Heart left ventricle (tissue), 16 donors: ENCODE measurements at regions of chr3 and their contacts with region 1.

Region 1: DNA sequence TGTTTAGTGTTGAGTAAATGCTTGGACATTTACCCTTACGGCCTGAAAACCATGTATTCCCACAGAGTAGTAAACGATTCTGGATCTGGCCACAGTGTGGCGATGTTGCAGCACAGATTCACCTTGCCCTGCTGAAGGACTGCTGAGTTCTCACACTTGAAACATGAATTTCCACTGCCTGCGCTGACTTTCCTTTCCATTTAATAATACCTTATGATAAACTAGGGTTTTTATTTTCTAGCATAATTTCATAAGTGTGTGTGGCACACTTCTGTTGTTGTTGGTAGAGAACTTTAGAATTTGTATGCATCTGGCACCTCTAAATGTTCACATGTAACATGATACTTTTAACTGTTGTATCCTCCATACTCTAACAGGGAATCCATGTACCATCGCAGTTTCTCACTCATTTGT is 53.9 kb downstream of the C3orf38 start:
- DNase-seq: peak; percentile 53 to 68 (median 60)
- ATAC-seq: peak in 3 of 4 donors; percentile 79 to 93 (median 84)
- H3K4me3 ChIP-seq: no peak overlapping the region
- H3K27ac ChIP-seq: no peak overlapping the region
- H3K4me1 ChIP-seq: no peaks in the 10 kb centered on the region
- H3K27me3 ChIP-seq: no peaks in the 10 kb centered on the region
- CTCF ChIP-seq: peak; percentile 69 to 89 (median 83)
- POLR2A ChIP-seq: no peak

Region 2: DNA sequence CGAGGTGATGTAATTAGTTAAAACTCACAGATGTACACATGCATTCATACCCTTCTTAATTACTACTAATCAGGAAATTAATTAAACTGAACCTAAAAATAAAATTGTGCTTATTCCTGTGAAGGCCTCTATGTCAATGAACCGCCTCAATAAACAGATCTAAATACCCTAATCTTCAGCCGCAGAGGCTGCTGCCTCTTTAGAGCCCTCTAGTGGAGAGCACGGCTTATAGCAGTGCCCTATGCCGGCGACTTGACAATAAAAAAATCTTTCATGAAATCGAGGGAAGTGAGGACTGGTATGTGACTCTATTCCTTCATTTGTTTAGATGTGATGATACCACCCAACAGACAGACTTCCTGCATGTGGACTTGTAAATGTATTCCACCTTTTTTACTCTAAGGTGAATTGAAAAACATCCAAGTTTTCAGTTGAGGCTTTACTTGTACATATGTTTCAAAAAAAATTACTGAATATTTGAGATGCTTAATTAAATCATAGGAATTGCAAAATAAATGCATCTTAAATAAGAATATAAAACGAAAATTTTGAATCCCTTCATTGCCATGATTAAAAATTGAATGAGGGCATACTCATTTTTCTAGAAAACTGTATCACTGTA is 895.4 kb after region 1 on chr3:
- intact Hi-C with region 1: loop called in 2 of 10 experiments (anchors 5 to 10 kb)
- DNase-seq: peak in 1 of 5 donors; percentile 33
- ATAC-seq: peak in 2 of 4 donors; percentile 66 to 69
- H3K4me3 ChIP-seq: no peak overlapping the region
- H3K27ac ChIP-seq: no peak overlapping the region
- H3K4me1 ChIP-seq: peaks cover 0 to 4% (median 0%) of the 10 kb centered on the region in 12 donors
- H3K27me3 ChIP-seq: no peaks in the 10 kb centered on the region
- CTCF ChIP-seq: peak; percentile 78 to 98 (median 86)
- POLR2A ChIP-seq: no peak

Region 3: DNA sequence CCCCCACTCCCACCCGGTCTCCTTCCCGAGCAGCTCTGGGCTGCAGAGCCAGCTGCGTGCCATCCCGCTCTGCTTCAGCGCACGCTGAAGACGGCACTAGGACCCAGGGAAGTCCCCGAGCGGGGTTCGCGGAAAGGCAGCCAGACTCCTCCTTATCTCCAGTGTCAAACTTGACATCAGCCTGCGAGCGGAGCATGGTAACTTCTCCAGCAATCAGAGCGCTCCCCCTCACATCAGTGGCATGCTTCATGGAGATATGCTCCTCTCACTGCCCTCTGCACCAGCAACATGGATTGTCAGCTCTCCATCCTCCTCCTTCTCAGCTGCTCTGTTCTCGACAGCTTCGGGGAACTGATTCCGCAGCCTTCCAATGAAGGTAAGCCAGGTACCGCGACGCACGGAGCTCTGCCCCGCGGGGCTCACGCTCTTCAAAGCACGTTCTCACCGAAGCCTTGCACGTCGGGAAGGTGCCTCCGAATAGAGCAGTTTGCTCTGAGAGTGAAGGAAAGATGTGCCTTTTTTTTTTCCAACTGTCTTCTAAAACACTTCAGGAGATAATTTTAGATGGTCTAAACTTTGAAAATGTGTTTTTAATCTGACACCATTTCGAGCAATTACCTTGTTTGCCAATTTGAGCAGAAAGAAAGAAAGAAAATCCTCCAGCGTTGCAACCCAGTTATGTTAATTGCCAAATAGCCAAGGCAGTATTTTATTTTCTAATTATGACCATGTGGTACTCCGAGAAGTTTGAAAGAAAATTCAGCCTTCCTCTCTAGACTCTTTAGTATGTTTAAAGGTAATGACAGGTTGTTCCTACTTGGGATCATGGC is 904.0 kb after region 1 on chr3 and contains the start of gene EPHA3:
- intact Hi-C with region 1: loop called in 4 of 10 experiments (anchors 5 to 10 kb)
- DNase-seq: peak; percentile 72 to 84 (median 82)
- ATAC-seq: peak; percentile 73 to 97 (median 94)
- H3K4me3 ChIP-seq: peak within 1 kb of the TSS; percentile 34 to 71 (median 58)
- H3K27ac ChIP-seq: peak within 1 kb of the TSS in 8 of 12 donors; percentile 12 to 60 (median 25)
- H3K4me1 ChIP-seq: peaks cover 0 to 14% (median 0%) of the 10 kb centered on the region in 12 donors
- H3K27me3 ChIP-seq: peaks cover 0 to 18% (median 0%) of the 10 kb centered on the region in 9 donors
- CTCF ChIP-seq: no peak
- POLR2A ChIP-seq: peak in 1 of 2 donors; percentile 35
- total RNA-seq, gene EPHA3: 2.2 to 9.4 (median 4.4) TPM

Region 4: DNA sequence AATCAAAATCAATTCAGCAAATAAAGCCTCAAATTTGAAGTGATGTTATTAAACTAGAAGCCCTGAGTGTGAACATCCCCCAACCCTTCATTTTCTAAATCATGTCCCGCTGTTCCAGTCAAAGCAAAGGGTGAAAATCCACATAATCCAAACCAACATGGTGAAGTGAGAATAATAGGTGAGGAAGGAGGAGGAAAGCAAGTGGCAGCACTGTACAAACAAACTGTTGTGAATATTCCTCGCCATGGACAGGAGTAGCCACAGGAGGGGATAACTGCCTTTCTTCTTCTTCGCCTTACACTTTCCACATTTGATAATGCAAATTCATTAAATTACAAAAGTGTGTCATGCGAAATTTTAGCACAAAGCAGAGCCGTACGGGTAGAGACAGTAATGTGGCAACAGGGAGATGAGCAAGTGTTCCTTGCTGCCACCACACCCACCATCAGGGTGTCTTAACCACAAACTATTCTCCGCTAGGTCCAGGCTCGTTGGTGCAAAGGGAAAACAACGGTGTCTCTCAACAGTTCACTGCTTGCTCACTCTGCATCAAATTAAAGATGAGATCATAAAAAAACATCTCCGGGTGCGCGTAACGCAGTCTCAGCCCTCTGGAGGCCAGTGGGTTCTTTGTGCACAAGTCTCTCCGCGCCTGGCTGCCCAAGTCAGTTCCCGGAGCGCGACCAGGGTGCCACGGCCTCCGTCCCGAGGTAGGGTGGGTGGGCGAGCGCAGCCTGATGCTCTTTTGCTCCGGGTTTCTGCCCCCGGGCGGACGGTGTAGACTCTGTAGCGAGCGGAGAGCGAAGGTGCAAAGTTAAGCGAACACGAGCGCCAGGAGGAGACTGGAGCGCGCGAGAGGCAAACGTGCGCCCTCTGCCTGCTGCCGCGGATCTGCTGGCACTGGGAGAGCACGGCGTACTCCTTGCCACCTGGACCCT is 910.5 kb after region 1 on chr3:
- intact Hi-C with region 1: loop called in 5 of 10 experiments (anchors 2 to 10 kb)
- DNase-seq: peak; percentile 67 to 77 (median 70)
- ATAC-seq: peak; percentile 87 to 99 (median 97)
- H3K4me3 ChIP-seq: peak overlapping the region in 11 of 12 donors; percentile 33 to 66 (median 55)
- H3K27ac ChIP-seq: peak overlapping the region in 10 of 12 donors; percentile 20 to 74 (median 61)
- H3K4me1 ChIP-seq: peaks cover 0 to 9% (median 0%) of the 10 kb centered on the region in 12 donors
- H3K27me3 ChIP-seq: peaks cover 0 to 4% (median 0%) of the 10 kb centered on the region in 9 donors
- CTCF ChIP-seq: peak; percentile 47 to 82 (median 66)
- POLR2A ChIP-seq: no peak

Region 5: GRCh38 chr3:89851974-89852621 is 1648.4 kb after region 1 on chr3:
- intact Hi-C with region 1: loop called in 1 of 10 experiments (anchors 10 kb)
- DNase-seq: peak in 4 of 5 donors; percentile 20 to 30 (median 28)
- ATAC-seq: peak in 3 of 4 donors; percentile 45 to 74 (median 46)
- H3K4me3 ChIP-seq: no peak overlapping the region
- H3K27ac ChIP-seq: no peak overlapping the region
- H3K4me1 ChIP-seq: no peaks in the 10 kb centered on the region
- H3K27me3 ChIP-seq: no peaks in the 10 kb centered on the region
- CTCF ChIP-seq: peak in 10 of 12 donors; percentile 12 to 65 (median 47)
- POLR2A ChIP-seq: no peak

Region 6: GRCh38 chr3:90091204-90091924 is 1887.7 kb after region 1 on chr3:
- intact Hi-C with region 1: loop called in 8 of 10 experiments (anchors 5 to 10 kb)
- DNase-seq: peak in 3 of 5 donors; percentile 19 to 26 (median 21)
- ATAC-seq: peak; percentile 58 to 76 (median 72)
- H3K4me3 ChIP-seq: peak overlapping the region in 1 of 12 donors; percentile 22
- H3K27ac ChIP-seq: no peak overlapping the region
- H3K4me1 ChIP-seq: peaks cover 0 to 5% (median 0%) of the 10 kb centered on the region in 12 donors
- H3K27me3 ChIP-seq: no peaks in the 10 kb centered on the region
- CTCF ChIP-seq: peak; percentile 27 to 69 (median 46)
- POLR2A ChIP-seq: no peak

Region 7: DNA sequence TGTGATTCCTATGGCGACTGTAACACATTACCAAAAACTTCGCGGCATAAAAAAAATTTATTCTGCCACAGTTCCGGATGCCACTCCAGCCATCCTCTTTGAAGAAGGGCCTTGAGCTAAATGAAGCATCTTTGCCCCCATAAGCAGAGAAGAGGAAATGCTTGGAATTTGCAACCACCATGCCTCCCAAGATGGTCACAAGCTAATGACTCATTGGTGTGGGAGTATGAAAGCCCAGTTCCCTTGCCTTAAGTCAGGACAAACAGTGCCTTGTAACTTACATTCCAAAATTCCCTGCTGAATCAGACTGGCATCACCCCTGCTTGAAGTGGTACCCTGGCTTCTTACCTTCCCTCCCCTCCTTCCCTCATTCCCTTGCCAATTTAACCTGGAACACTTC is 1981.2 kb after region 1 on chr3:
- intact Hi-C with region 1: loop called in 9 of 10 experiments (anchors 5 to 10 kb)
- DNase-seq: no peak
- ATAC-seq: no peak
- H3K4me3 ChIP-seq: no peak overlapping the region
- H3K27ac ChIP-seq: no peak overlapping the region
- H3K4me1 ChIP-seq: no peaks in the 10 kb centered on the region
- H3K27me3 ChIP-seq: peaks cover 0 to 4% (median 0%) of the 10 kb centered on the region in 9 donors
- CTCF ChIP-seq: no peak
- POLR2A ChIP-seq: no peak